ENCODE measurements at regions of chr10 and their contacts with region 1.

Region 1: DNA sequence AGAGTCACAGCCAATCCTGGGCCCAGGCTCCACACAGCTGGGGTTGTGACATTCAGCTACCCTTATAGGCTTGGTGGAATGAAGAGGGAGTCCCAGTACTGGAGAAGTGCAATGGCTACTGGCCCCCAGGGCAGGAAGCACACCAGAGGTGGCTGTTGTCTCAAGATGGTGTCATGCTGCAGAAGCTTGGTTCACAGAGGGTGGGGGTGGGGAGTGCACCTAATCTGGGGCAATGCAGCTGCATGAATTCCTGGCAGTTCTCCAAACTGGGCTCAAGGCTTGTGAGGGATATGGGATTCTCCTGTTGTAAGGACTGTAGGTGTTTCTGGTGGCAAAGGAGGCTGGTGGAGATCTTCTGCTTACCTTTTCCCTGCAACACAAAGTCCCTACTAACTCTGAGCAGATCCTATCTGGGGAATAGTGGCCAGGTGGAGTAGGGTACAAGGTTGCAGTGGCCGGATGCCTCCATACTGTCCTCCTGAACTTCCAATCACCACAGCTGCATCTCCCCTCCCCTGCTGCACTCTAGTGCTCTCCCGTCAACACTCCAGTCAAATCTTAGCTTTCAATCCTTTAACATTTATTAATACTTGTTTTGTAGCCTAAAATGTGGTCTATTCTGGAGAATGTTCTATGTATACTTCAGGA is 27.4 kb upstream of the PLA2G12B start:
- DNase-seq: no peak
- H3K4me3 ChIP-seq: no peak overlapping the region
- H3K27me3 ChIP-seq: no peaks in the 10 kb centered on the region
- CTCF ChIP-seq: no peak

Region 2: GRCh38 chr10:72009411-72010081 is 972.5 kb before region 1 on chr10:
- CTCF ChIA-PET with region 1: no interaction called
- POLR2A ChIA-PET with region 1: interaction called, 11 read pairs
- DNase-seq: peak; percentile 96
- H3K4me3 ChIP-seq: no peak overlapping the region
- H3K27me3 ChIP-seq: no peaks in the 10 kb centered on the region
- CTCF ChIP-seq: no peak

Region 3: GRCh38 chr10:73167783-73168464 is 185.9 kb after region 1 on chr10 and contains the starts of genes ECD and FAM149B1:
- CTCF ChIA-PET with region 1: no interaction called
- POLR2A ChIA-PET with region 1: no interaction called
- DNase-seq: peak; percentile 64
- H3K4me3 ChIP-seq: peak within 1 kb of the TSS; percentile 96
- H3K27me3 ChIP-seq: no peaks in the 10 kb centered on the region
- CTCF ChIP-seq: 0 out of 2 replicates have a peak, but pooled peaks have one; percentile 20
- polyA plus RNA-seq, gene ECD: 25.4 and 32.7 TPM in 2 replicates
- polyA plus RNA-seq, gene FAM149B1: 33.0 and 40.2 TPM in 2 replicates